Breast epithelium (tissue), 4 donors: ENCODE measurements at regions of chr13 and their contacts with region 1.

Region 1: DNA sequence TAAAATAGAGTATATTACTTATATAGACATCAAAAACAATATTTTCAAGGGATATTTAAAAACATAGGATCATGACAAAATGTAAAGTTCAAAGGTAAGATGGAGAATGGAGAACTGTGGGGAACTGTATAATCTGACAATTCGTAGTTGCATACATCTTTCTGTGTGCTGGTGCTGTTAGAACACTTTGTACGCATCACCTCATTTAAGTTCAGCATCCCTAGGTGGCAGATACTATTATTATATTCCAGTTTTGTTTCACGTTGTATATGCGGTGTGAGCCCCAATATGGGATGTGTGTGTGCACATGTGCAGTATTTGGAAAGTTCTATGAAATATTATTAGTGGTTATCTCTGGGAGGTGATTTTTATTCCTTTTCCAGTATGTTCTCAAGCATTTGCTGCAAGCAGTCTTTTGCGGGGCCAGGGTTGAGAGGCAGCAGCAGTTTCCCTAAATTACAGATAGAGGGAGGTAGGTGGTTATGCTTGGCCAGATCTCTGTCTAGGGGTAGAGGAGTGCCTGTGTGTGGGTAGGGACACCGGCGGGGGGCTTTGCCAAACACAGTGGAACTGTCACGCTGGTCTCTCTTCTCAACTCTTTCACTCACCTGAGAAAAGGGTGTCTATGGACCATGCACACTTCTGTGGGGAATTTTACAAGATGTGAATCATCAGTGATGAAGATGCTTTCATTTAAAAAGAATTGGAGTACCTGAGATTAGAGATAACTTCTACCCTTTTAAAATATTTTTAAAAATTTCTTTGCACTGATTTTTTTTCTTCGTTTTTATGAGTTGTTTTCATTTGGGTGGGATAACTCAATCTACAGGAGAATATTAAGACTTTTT is 55.6 kb upstream of the ALOX5AP start:
- DNase-seq: no peak
- H3K4me3 ChIP-seq: no peak overlapping the region
- H3K27ac ChIP-seq: no peak overlapping the region
- H3K4me1 ChIP-seq: no peaks in the 10 kb centered on the region
- H3K27me3 ChIP-seq: no peaks in the 10 kb centered on the region
- CTCF ChIP-seq: peak in 2 of 3 donors; percentile 26 to 35
- POLR2A ChIP-seq: no peak

Region 2: GRCh38 chr13:30792285-30793000 is 112.7 kb after region 1 on chr13:
- intact Hi-C with region 1: loop called (anchors 10 kb)
- DNase-seq: peak; percentile 87 to 91
- H3K4me3 ChIP-seq: no peak overlapping the region
- H3K27ac ChIP-seq: peak overlapping the region; percentile 83 to 86
- H3K4me1 ChIP-seq: peaks cover 6 to 25% of the 10 kb centered on the region in 2 donors
- H3K27me3 ChIP-seq: no peaks in the 10 kb centered on the region
- CTCF ChIP-seq: peak in 2 of 3 donors; percentile 38 to 42
- POLR2A ChIP-seq: no peak

Region 3: DNA sequence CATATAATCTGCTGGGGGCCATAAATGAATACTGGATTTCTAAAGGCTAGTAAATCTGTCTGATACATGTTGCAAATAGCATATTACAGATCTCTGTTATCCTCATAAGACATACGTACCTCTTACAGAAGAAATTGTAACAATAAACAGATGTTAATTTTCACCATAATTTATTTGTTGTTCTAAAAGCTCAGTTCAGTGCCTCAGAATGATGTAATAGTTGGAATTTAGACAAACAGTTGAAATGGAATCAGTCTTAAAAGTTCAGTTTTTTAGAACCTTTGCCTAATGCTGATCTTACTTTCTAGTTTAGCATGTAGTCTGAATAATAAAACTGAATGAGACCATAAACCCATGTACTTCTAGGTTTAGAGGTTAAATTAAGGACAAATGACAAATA is 563.2 kb after region 1 on chr13:
- intact Hi-C with region 1: no loop called
- DNase-seq: no peak
- H3K4me3 ChIP-seq: no peak overlapping the region
- H3K27ac ChIP-seq: no peak overlapping the region
- H3K4me1 ChIP-seq: no peaks in the 10 kb centered on the region
- H3K27me3 ChIP-seq: no peaks in the 10 kb centered on the region
- CTCF ChIP-seq: no peak
- POLR2A ChIP-seq: no peak